ENCODE measurements at regions of chr19 and their contacts with region 1.

Region 1: GRCh38 chr19:4246767-4247593 is at the start of gene YJU2:
- DNase-seq: peak; percentile 100
- ATAC-seq: peak; percentile 97
- H3K4me3 Mint-ChIP-seq: peak within 1 kb of the TSS; percentile 84
- H3K27ac Mint-ChIP-seq: peak within 1 kb of the TSS; percentile 100
- H3K4me1 Mint-ChIP-seq: peaks cover 9% of the 10 kb centered on the region
- H3K27me3 Mint-ChIP-seq: no peaks in the 10 kb centered on the region
- total RNA-seq, gene YJU2: 29.8 to 34.8 TPM

Region 2: DNA sequence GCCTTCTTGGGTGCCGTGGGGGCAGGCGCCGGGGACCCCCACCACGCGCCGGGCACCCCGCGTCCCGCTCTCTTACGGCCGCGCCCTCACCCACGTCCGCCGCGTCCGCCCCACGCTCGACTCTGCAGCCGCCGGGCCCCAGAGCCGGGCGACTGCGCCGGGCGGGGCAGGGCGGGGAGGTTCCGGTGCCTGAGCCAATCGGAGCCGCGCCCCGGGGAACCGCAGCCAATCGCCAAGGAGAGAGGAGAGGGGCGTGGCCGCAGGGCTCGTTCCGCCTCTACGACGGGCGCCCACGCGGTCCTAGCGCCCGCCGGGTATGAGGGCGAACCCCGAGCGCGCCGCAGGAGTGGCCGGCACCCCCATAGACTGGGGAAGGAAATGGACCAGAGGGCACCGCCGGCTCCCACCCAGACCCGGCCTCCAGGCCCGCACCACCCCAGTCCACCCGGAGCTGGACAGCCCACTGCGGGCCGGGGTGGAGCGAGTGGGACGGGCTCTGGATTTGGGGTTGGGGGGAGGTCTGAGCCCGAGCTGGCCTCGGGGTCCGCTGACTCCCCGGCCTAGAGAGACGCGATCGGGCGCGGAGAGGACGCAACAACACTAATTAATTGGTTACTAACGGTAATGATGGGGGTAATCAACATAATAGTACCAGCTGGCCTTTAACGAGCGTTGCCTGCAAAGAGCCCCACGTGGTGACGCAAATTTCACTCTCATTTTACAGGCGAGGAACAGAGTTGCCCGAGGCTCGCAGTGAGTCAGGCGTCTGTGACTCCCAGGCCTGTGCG is 689.3 kb before region 1 on chr19 and contains the start of gene MFSD12:
- CTCF ChIA-PET with region 1: no interaction called
- POLR2A ChIA-PET with region 1: no interaction called
- intact Hi-C with region 1: loop called in 1 of 2 experiments (anchors 2 kb)
- DNase-seq: peak; percentile 97
- ATAC-seq: peak; percentile 89
- H3K4me3 Mint-ChIP-seq: peak within 1 kb of the TSS; percentile 96
- H3K27ac Mint-ChIP-seq: peak within 1 kb of the TSS; percentile 92
- H3K4me1 Mint-ChIP-seq: peaks cover 36% of the 10 kb centered on the region
- H3K27me3 Mint-ChIP-seq: no peaks in the 10 kb centered on the region
- total RNA-seq, gene MFSD12: 44.7 to 46.7 TPM

Region 3: DNA sequence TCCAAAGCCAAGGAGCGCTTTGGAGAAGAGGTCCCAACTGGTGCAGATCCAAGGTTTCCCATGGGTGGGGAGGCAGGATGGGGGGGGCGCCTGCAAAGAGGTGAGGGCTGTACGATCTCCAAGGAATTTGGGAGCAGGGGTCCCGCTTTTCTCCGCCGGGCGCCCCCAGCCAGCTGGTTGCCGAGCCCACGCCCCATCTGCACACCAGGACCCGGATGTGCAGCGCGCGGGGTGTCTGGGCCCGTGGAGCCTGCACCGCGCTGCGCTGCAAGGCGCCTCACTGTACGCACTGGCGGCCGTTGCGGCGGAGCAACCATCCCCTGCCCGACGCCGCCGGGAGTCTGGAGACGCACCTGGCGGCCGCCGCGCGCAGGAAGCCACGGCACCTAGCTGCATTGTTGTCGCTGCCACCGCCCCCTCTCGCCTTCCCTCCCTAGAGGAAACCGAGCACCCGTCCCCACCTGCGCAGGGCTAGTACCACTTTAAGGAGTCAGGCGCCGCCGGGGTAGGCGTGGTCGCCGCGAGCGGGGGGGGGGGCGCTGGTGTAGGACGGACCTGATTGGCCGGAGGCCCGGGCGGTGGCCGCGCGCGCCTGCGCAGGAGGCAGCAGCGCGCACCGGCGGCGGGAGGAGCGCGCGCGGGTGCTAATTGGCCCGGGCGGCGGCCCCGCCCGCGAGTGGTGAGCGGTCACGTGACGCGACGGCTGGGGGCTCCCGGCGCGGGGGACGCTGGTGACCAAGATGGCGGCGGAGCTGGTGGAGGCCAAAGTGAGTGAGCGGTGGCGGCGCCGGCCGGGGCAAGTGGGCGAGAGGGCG is 239.8 kb before region 1 on chr19 and contains the start of gene PIAS4:
- CTCF ChIA-PET with region 1: no interaction called
- POLR2A ChIA-PET with region 1: no interaction called
- intact Hi-C with region 1: loop called in 1 of 2 experiments (anchors 1 kb)
- DNase-seq: peak; percentile 97
- ATAC-seq: peak; percentile 92
- H3K4me3 Mint-ChIP-seq: peak within 1 kb of the TSS; percentile 75
- H3K27ac Mint-ChIP-seq: peak within 1 kb of the TSS; percentile 71
- H3K4me1 Mint-ChIP-seq: peaks cover 27% of the 10 kb centered on the region
- H3K27me3 Mint-ChIP-seq: no peaks in the 10 kb centered on the region
- total RNA-seq, gene PIAS4: 23.0 to 37.3 TPM

Region 4: DNA sequence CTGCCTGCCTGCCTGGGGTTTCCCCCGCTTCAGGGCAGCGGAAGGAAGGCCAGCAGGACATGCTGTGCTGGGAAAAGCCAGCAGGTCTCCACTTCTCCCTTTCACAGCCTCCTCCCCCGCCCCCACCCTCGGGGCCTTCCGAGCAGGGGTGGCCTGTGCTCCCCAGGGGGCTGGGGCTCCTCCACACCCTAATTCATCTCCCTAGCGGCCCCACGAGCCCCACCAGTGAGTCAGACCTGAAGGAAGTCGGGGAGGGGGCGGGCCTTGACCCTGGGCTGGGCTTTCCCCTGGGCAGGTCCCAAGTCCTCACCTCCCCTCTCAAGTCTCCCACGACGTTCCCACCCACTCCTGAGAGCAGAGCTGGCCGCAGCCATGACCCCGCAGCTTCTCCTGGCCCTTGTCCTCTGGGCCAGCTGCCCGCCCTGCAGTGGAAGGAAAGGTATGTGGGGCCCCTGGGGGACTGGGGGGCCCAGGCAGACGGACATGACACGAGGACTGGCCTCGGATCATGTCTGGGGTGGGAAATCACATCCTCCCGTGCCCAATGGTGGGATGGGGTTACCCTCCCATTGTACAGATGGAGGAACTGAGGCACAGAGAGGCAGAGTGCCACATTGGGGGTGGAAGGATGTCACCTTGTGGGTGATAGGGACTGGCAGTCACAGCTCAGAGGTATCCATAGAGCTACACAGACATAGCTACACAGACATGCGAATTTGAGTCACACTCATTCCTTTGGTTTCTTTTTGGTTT is 17.6 kb before region 1 on chr19 and contains the start of gene EBI3:
- CTCF ChIA-PET with region 1: interaction called, 7 read pairs
- POLR2A ChIA-PET with region 1: interaction called, 6 read pairs
- intact Hi-C with region 1: loop called (anchors 1 to 2 kb)
- DNase-seq: peak; percentile 88
- ATAC-seq: peak; percentile 86
- H3K4me3 Mint-ChIP-seq: no peak within 1 kb of the TSS
- H3K27ac Mint-ChIP-seq: peak within 1 kb of the TSS; percentile 86
- H3K4me1 Mint-ChIP-seq: peaks cover 9% of the 10 kb centered on the region
- H3K27me3 Mint-ChIP-seq: peaks cover 6% of the 10 kb centered on the region
- total RNA-seq, gene EBI3: 14.5 to 16.8 TPM

Region 5: DNA sequence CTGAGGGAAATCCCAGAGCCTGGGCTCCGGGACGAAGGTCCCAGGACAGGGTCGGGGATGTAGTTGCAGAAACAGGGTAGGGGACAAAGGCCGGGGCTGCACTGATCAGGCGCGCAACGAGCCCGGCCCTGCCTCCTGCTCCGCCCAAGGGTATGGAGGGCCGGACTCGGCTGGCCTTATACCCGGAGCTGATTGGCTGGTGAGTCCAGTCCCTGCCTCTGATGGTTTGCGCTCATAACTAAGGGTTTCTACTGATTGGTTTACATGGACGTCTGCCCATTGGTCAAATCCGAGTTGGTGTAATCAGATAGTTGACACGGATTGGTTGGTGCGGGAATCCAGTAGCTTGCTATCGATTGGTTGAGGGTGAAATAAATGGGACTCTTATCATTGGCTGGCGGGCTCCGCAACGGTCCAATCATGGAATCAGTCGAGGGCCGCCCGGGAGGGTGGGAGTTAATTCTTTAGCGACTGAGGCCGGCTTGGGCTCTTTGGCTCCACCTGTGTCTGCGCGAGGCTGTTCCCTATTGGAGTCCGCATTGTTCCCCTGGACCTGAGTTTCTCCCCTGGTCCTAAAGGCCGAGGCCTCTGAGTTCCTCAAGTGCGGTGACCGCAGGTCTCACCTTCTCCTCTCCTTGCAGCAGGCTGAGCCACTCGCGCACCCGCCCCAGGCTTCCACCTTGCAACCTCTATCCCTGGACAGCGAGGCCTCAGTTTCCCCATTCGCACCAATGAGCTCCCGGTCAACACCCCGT is 95.8 kb after region 1 on chr19:
- CTCF ChIA-PET with region 1: interaction called, 10 read pairs
- POLR2A ChIA-PET with region 1: interaction called, 5 read pairs
- intact Hi-C with region 1: loop called (anchors 1 to 2 kb)
- DNase-seq: peak; percentile 97
- ATAC-seq: peak; percentile 91
- H3K4me3 Mint-ChIP-seq: peak overlapping the region; percentile 89
- H3K27ac Mint-ChIP-seq: peak overlapping the region; percentile 93
- H3K4me1 Mint-ChIP-seq: peaks cover 17% of the 10 kb centered on the region
- H3K27me3 Mint-ChIP-seq: no peaks in the 10 kb centered on the region

Measured in activated CD4-positive, alpha-beta T cell treated with anti-CD3 and anti-CD28 coated beads for 36 hours (primary cell).